Dendritic cell treated with granulocyte-macrophage colony-stimulating factor and Interleukin-4, amounts not matched to agents 40 ng/mL and 50 ng/mL, for 4 days (primary cell): ENCODE measurements at regions of chr2 and their contacts with region 1.

Region 1: DNA sequence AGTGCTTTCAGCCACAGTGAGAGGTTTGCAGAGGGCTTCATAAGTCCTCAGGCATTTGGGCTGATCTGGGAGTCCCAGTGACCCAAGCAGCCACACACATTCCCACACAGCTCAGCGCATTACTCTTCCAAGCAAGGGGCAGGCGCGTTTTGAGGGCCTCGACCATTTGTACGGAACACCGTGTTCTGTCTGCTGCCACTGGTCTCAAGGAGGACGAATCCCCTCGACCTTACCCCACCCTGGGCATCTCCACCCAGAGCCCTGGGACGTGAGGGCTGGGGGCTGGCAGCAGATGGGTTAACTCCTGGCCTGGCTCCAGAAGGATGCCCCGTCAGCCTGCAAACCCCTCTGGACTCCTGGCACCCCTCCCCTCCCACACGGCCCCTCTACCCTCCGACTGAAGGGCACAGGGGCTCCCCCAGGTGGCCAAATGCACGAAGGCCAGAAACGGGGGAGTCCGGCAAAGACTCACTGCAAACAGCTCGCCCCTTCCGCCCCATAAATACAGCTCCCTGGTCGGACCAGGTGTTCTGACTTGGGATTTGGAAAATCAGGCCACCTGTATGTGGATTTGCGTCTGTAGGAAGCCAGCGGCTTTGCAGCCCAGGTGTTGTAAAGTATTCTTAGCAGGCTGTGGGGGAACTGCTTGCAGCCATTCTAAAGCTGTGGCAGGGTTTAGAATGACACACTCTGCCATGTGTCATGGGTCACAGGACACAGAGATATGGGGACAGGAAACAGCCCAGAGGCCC is 33.6 kb upstream of the PTMA start:
- H3K4me3 Mint-ChIP-seq: no peak overlapping the region
- H3K27ac Mint-ChIP-seq: no peak overlapping the region
- H3K4me1 Mint-ChIP-seq: peaks cover 58% of the 10 kb centered on the region
- H3K27me3 Mint-ChIP-seq: peaks cover 5% of the 10 kb centered on the region

Region 2: GRCh38 chr2:231648587-231649174 is 26.1 kb before region 1 on chr2:
- intact Hi-C with region 1: loop called (anchors 1 kb)
- H3K4me3 Mint-ChIP-seq: no peak overlapping the region
- H3K27ac Mint-ChIP-seq: no peak overlapping the region
- H3K4me1 Mint-ChIP-seq: peaks cover 6% of the 10 kb centered on the region
- H3K27me3 Mint-ChIP-seq: peaks cover 1% of the 10 kb centered on the region

Region 3: DNA sequence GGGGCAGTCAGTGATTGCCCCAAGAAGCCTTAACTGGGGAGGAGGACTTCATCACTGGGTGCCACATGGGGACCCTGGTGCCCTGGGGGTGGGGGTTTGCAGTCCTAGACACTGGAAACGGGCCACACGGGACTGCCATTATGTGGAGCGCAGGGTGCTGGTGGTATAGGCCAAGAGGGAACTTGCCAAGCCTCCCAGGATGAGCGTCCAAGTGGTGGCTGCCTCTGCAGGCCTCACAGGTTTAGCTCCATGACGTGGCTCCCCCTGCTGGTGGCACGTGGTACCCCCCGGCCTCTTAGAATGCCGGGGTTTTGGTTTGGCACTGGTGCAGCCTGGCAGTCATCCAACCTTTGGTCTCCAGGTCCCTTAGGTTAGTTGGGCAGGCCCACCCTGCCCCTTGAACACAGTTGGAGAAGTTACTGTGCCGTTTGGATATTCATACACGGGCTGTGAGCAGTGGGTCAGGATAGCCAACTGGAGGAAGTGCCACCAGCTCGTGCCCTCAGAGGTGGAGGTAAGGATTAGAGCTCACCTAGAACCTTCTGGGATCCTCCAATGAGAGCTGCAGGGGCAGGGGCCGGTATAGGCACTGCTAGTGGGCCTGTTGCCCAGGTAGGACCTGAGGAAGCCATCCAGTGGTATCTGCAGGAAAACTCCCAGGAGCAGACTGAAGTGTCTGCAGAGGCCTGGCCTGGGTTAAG is 39.1 kb after region 1 on chr2:
- intact Hi-C with region 1: loop called (anchors 1 kb)
- H3K4me3 Mint-ChIP-seq: peak overlapping the region; percentile 23
- H3K27ac Mint-ChIP-seq: peak overlapping the region; percentile 85
- H3K4me1 Mint-ChIP-seq: peaks cover 72% of the 10 kb centered on the region
- H3K27me3 Mint-ChIP-seq: no peaks in the 10 kb centered on the region